ENCODE measurements at regions of chr5 and their contacts with region 1.

Region 1: GRCh38 chr5:65624571-65625555 is at the starts of genes SHLD3 and TRAPPC13:
- DNase-seq: peak; percentile 78
- H3K4me3 Mint-ChIP-seq: peak within 1 kb of the TSS; percentile 99
- H3K27ac Mint-ChIP-seq: peak within 1 kb of the TSS; percentile 99
- H3K4me1 Mint-ChIP-seq: peaks cover 25% of the 10 kb centered on the region
- H3K27me3 Mint-ChIP-seq: no peaks in the 10 kb centered on the region
- total RNA-seq, gene SHLD3: 4.2 and 5.0 TPM in 2 replicates
- total RNA-seq, gene TRAPPC13: 17.0 and 22.4 TPM in 2 replicates

Region 2: DNA sequence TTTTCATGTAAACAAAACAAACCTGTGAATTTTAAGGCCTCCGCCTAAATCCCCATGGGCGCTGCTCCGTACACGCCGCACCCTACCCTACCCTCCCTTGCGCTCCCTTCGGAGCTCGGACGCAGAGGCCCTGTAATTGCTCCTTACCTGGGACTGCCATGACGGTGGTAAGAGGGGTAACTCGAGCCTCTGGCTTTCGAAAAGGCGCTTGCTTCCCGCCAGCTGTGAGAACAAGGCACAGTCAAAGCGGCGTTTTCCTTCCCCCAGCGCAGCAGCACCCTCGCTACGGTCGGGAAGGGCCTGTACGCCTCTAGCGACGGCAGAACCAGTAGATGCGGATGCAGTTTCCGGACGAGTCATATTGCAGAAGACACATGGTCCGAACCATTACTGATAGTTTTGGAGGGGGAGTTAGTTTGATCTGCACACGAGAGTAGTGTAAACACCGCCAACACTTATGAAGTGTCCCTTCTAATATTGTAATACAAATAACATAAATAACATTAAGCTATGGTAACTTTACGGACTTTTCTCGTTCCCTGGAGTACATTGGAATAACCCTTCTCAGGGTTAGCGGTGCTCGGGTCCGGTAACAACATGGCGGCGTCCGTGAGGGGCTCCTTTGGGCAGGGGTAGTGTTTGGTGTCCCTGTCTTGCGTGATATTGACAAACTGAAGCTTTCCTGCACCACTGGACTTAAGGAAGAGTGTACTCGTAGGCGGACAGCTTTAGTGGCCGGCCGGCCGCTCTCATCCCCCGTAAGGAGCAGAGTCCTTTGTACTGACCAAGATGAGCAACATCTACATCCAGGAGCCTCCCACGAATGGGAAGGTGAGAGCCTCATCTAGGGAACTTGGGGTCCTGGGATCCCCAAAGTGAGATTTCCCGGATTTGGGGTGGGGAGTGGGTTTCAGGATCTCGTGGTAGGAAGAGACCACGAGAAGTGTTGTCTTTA is 856.2 kb before region 1 on chr5 and contains the starts of genes CWC27 and SREK1IP1:
- intact Hi-C with region 1: loop called (anchors 2 kb)
- DNase-seq: peak; percentile 79
- H3K4me3 Mint-ChIP-seq: peak within 1 kb of the TSS; percentile 98
- H3K27ac Mint-ChIP-seq: peak within 1 kb of the TSS; percentile 96
- H3K4me1 Mint-ChIP-seq: peaks cover 47% of the 10 kb centered on the region
- H3K27me3 Mint-ChIP-seq: no peaks in the 10 kb centered on the region
- total RNA-seq, gene CWC27: 30.3 and 32.9 TPM in 2 replicates
- total RNA-seq, gene SREK1IP1: 30.9 and 32.9 TPM in 2 replicates

Region 3: DNA sequence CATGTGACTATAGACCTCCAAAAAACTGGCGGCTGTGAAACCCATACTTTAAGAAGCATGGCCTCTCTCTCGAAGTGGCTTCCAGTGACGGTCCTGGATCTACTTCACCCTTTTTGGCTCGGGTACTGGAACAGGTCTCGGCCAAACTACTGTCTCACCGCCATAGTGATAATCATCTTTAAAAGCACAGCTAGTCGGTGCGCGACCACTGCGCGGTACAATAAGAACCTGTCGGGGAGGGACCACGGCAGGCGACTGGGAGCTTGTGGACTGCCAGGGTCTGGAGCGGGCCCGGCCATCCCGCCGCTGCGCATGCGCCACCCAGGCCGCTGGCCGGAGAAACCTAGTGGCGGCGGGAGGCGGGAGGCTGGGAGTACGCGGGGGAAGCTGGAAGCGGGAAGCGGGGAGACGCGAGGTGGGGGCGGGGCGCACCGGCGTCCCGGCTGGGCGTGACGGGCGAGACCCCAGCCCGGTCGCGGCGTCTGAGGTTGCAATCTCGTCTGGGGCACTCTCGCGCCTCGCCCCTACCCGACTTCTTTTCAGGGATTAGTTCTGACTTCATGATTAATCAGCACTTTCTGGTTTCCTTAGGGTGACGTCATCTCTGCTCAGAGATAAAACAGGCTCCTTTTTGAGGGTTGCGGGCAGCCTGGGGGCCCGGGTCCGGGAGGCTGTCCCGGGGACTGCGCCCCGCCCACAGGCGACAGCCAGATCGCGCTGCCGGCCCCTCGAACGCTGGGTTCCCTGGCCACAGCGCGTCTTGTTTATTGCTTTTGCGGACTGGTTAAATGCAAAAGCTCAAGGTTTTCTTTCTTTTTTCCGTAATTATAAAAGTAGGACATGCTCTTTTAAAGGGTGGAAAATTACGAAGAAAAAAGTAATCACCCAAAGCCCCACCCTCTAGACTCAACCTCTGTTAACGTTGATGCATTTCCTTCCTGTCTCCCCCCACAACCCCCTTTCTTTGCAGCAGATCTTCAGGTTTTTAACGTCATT is 589.4 kb before region 1 on chr5:
- intact Hi-C with region 1: loop called (anchors 10 kb)
- DNase-seq: peak; percentile 79
- H3K4me3 Mint-ChIP-seq: peak overlapping the region; percentile 78
- H3K27ac Mint-ChIP-seq: peak overlapping the region; percentile 83
- H3K4me1 Mint-ChIP-seq: peaks cover 34% of the 10 kb centered on the region
- H3K27me3 Mint-ChIP-seq: no peaks in the 10 kb centered on the region

Region 4: DNA sequence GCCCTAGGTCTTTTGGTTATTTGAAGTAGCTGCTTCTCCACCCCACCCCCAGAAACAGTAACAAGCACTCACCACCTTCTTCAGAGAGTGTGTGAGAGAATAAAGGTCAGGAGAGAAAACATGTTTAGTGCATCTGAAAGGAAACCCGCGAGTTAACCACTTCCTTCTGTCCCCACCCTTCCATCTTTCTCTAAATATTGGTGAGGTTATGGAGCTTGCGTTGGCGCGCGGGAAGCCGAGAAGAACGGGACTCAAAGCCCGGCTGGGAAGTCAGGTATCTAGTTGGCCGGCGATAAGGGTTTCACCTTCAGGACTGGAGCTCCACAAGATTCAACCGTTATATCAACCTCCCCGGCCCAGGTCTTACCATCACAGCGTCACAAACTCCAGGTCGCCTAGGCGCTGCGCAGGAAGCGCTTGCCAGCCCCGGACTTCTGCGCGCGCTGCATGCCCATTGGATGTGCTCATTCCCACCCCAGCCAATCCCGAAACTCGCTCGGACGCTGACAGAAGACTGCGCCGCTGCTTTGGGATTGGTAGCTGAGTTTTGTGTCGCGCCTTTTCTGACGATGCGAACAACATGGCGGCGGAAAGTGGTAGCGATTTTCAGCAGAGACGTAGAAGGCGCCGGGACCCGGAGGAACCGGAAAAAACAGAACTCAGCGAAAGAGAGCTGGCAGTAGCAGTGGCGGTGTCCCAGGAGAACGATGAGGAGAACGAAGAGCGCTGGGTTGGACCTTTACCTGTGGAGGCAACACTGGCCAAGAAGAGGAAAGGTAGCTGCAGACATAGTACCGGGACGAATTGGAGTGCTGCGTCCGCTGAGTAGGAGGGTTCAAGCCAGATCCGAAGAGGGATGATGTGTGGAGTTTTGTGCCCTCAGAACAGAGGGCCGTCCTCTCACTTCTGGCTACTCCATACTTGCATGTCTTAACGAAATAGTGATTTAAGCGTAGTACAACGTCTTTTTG is 61.8 kb before region 1 on chr5 and contains the starts of genes CENPK and PPWD1:
- intact Hi-C with region 1: loop called (anchors 1 kb)
- DNase-seq: peak; percentile 95
- H3K4me3 Mint-ChIP-seq: peak within 1 kb of the TSS; percentile 91
- H3K27ac Mint-ChIP-seq: peak within 1 kb of the TSS; percentile 97
- H3K4me1 Mint-ChIP-seq: peaks cover 48% of the 10 kb centered on the region
- H3K27me3 Mint-ChIP-seq: no peaks in the 10 kb centered on the region
- total RNA-seq, gene CENPK: 78.0 and 79.2 TPM in 2 replicates
- total RNA-seq, gene PPWD1: 51.9 and 53.8 TPM in 2 replicates

Region 5: DNA sequence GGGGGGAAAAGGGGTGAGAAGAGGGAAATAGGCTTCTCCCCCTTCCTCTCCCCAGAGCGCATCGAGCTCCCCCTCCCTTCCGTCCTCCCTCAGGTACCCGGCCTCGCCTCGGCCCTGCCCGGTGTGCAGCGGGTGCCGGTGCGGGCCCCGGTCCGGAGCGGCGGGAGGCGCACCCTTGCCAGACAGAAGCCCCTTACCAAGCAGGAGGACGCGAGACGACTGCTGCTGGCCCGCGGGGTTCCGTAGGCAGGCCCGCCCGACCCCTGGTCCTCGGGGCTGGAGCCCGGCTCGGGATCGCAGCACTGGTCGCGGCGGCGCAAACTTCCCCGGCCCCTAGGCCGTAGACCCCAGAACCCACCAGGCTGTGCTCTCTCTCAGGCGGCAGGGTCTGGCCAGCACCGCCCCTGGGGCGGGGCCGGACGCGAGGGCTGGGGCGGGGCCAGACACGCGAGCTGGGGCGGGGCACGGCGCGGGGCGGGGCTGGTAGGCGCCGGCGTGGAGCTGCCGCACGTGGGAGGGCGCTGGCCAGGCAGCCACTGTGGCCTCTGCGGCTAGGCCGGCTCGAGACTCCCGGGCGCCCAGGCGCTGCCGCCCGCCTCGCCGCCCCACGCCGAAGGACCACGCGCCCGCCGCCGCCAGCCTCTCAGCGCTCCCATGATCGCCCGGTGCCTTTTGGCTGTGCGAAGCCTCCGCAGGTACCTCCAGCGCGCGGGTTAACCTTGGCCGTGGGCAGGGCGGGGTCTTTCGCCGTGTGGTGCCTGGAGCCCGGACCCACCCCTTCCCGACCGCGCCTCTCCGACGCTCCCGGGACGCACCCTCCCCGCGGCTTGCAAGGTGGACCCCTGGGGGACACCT is 97.1 kb after region 1 on chr5 and contains the starts of genes NLN and SGTB:
- intact Hi-C with region 1: loop called (anchors 2 kb)
- DNase-seq: peak; percentile 79
- H3K4me3 Mint-ChIP-seq: peak within 1 kb of the TSS; percentile 93
- H3K27ac Mint-ChIP-seq: peak within 1 kb of the TSS; percentile 88
- H3K4me1 Mint-ChIP-seq: peaks cover 29% of the 10 kb centered on the region
- H3K27me3 Mint-ChIP-seq: no peaks in the 10 kb centered on the region
- total RNA-seq, gene NLN: 22.5 and 22.8 TPM in 2 replicates
- total RNA-seq, gene SGTB: 7.6 TPM in 2 replicates

Region 6: DNA sequence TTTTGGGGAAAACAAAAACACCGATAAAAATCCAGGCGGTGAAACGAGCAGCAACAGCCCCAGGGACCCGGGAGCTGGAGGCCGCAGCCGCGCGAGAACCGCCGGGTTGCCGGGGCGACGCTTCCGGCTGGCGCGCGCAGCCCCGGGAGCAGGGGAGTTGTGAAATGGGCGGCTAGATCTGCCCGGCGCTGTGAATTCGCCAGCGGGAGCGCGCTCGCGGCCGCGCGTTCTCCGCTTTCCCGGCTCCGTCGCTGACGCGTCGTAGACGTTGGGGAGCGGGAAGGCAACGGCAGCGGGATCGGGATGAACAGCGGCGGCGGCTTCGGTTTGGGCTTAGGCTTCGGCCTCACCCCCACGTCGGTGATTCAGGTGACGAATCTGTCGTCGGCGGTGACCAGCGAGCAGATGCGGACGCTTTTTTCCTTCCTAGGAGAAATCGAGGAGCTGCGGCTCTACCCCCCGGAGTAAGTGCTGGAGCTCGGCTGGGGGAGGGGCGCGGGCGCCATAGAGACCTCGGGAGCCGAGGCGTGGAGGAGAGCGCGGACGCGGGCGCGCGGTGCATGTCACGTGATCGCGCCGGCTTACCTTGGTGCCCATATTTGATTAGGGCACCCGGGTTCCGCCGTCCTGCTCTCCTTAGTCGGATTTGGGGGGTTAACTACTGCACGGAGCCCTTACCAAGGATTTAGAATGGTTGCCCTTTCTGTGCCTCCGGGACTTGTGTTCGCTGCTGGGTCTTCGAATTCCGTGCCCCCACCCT is 519.4 kb after region 1 on chr5 and contains the start of gene SREK1:
- intact Hi-C with region 1: loop called (anchors 2 kb)
- DNase-seq: peak; percentile 85
- H3K4me3 Mint-ChIP-seq: peak within 1 kb of the TSS; percentile 92
- H3K27ac Mint-ChIP-seq: peak within 1 kb of the TSS; percentile 99
- H3K4me1 Mint-ChIP-seq: peaks cover 37% of the 10 kb centered on the region
- H3K27me3 Mint-ChIP-seq: no peaks in the 10 kb centered on the region
- total RNA-seq, gene SREK1: 67.8 and 69.9 TPM in 2 replicates

Region 7: GRCh38 chr5:67165526-67166459 is 1540.9 kb after region 1 on chr5:
- intact Hi-C with region 1: loop called (anchors 5 kb)
- DNase-seq: peak; percentile 82
- H3K4me3 Mint-ChIP-seq: peak overlapping the region; percentile 84
- H3K27ac Mint-ChIP-seq: peak overlapping the region; percentile 93
- H3K4me1 Mint-ChIP-seq: peaks cover 49% of the 10 kb centered on the region
- H3K27me3 Mint-ChIP-seq: no peaks in the 10 kb centered on the region

Measured in activated T-helper 2 cell treated with anti-CD3 and anti-CD28 coated beads, Interferon-gamma antibody, Interleukin-2, Interleukin-4, amounts not matched to agents 10 μg/mL and 5 μg/mL and 100 μg/mL, durations not matched to agents 14 hours and 24 hours and 36 hours (primary cell).